CD14-positive monocyte (primary cell): ENCODE measurements at regions of chr18 and their contacts with region 1.

Region 1: DNA sequence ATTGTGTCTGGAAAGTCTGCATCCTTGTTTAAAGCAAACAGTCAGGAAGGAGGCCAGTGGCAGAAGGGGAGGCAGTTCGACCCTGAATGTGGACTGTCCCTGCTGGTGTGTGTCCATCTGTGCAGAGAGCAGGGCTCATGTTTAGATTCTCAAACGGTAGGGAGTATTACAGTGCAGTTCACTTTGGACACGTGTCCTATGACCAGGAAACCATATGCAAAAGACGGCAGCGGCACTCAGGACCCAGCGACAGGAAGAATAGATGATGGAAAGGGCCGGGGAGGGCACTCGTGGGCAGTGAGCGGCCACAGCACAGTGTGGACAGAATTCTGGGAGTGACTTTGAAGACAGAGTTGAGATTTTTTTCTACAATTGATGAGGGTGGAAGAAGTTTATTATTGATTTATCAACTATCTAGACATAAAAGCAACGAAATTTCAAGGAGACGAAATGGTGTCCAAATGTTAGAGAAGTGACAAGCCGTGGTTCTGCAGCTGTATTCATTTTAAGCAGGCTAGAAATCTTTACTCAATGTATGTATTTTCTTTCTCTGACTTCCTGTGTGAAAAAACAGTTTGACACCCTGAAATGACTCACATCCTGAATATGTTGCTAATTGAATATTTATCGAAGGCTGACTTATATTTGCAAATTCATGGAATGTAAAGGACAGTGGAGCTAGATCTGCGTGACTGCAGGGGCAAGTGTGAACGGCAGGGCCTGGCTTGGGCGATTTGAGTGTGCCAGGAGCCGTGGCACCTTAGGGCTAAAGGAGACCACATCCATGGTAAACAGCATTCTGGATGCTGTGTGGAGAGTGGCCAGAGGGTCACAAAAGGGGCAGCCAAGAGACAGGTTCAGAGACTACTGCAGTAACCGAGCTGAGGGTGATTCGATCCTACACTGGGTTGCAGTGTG is 214.2 kb downstream of the PTGR3 start:
- DNase-seq: peak; percentile 62 to 67 (median 63)
- H3K4me3 ChIP-seq: peak overlapping the region; percentile 8 to 48 (median 31)
- H3K4me3 Mint-ChIP-seq: peak overlapping the region; percentile 71 to 91
- H3K27ac ChIP-seq: peak overlapping the region; percentile 83 to 89
- H3K27ac Mint-ChIP-seq: peak overlapping the region; percentile 93 to 98 (median 97)
- H3K4me1 ChIP-seq: peaks cover 57 to 62% of the 10 kb centered on the region in 2 donors
- H3K4me1 Mint-ChIP-seq: peaks cover 58% of the 10 kb centered on the region
- H3K27me3 ChIP-seq: no peaks in the 10 kb centered on the region
- H3K27me3 Mint-ChIP-seq: peaks cover 0 to 3% (median 0%) of the 10 kb centered on the region in 3 donors
- CTCF ChIP-seq: no peak

Region 2: GRCh38 chr18:74861154-74861553 is 133.6 kb before region 1 on chr18:
- intact Hi-C with region 1: no loop called
- DNase-seq: no peak
- H3K4me3 ChIP-seq: no peak overlapping the region
- H3K4me3 Mint-ChIP-seq: no peak overlapping the region
- H3K27ac ChIP-seq: no peak overlapping the region
- H3K27ac Mint-ChIP-seq: no peak overlapping the region
- H3K4me1 ChIP-seq: no peaks in the 10 kb centered on the region
- H3K4me1 Mint-ChIP-seq: no peaks in the 10 kb centered on the region
- H3K27me3 ChIP-seq: no peaks in the 10 kb centered on the region
- H3K27me3 Mint-ChIP-seq: no peaks in the 10 kb centered on the region
- CTCF ChIP-seq: no peak

Region 3: GRCh38 chr18:74982946-74983635 is 11.7 kb before region 1 on chr18:
- intact Hi-C with region 1: loop called in 1 of 2 experiments (anchors 1 kb)
- DNase-seq: peak; percentile 74 to 90 (median 88)
- H3K4me3 ChIP-seq: no peak overlapping the region
- H3K4me3 Mint-ChIP-seq: peak overlapping the region in 1 of 2 donors; percentile 67
- H3K27ac ChIP-seq: peak overlapping the region; percentile 95
- H3K27ac Mint-ChIP-seq: peak overlapping the region; percentile 94 to 99 (median 98)
- H3K4me1 ChIP-seq: peaks cover 18 to 20% of the 10 kb centered on the region in 2 donors
- H3K4me1 Mint-ChIP-seq: peaks cover 22% of the 10 kb centered on the region
- H3K27me3 ChIP-seq: no peaks in the 10 kb centered on the region
- H3K27me3 Mint-ChIP-seq: no peaks in the 10 kb centered on the region
- CTCF ChIP-seq: no peak

Region 4: GRCh38 chr18:75070625-75071483 is 76.1 kb after region 1 on chr18:
- intact Hi-C with region 1: loop called (anchors 2 to 10 kb)
- DNase-seq: peak; percentile 96 to 99 (median 96)
- H3K4me3 ChIP-seq: peak overlapping the region; percentile 26 to 68 (median 33)
- H3K4me3 Mint-ChIP-seq: peak overlapping the region; percentile 77 to 91
- H3K27ac ChIP-seq: peak overlapping the region; percentile 95 to 97
- H3K27ac Mint-ChIP-seq: peak overlapping the region; percentile 87 to 99 (median 98)
- H3K4me1 ChIP-seq: peaks cover 41 to 46% of the 10 kb centered on the region in 2 donors
- H3K4me1 Mint-ChIP-seq: peaks cover 48% of the 10 kb centered on the region
- H3K27me3 ChIP-seq: no peaks in the 10 kb centered on the region
- H3K27me3 Mint-ChIP-seq: peaks cover 0 to 3% (median 2%) of the 10 kb centered on the region in 3 donors
- CTCF ChIP-seq: no peak

Region 5: DNA sequence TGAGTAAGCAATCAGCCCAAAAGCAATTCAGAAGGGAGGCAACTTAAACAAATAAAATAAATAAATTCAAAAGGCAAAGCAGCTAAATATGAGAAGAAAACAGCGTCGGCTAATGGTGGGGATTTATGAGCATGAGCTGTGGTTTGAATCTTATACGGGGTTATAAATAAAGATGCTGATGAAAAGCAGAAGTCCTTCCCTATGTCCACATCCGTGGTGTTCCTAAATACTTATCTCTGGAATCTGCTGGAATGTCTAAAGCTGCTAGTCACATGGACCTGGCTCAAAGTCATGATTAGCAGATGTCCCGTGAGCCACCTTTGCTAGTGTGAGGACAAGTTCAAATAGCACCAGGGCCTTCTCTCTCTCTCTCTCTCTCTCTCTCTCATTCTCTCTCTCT is 399.0 kb after region 1 on chr18:
- intact Hi-C with region 1: no loop called
- DNase-seq: no peak
- H3K4me3 ChIP-seq: no peak overlapping the region
- H3K4me3 Mint-ChIP-seq: no peak overlapping the region
- H3K27ac ChIP-seq: no peak overlapping the region
- H3K27ac Mint-ChIP-seq: no peak overlapping the region
- H3K4me1 ChIP-seq: no peaks in the 10 kb centered on the region
- H3K4me1 Mint-ChIP-seq: no peaks in the 10 kb centered on the region
- H3K27me3 ChIP-seq: peaks cover 0 to 7% of the 10 kb centered on the region in 2 donors
- H3K27me3 Mint-ChIP-seq: peaks cover 3 to 8% (median 5%) of the 10 kb centered on the region in 3 donors
- CTCF ChIP-seq: no peak